Dendritic cell treated with granulocyte-macrophage colony-stimulating factor and Interleukin-4, amounts not matched to agents 40 ng/mL and 50 ng/mL, for 4 days (primary cell): ENCODE measurements at regions of chr16 and their contacts with region 1.

Region 1: DNA sequence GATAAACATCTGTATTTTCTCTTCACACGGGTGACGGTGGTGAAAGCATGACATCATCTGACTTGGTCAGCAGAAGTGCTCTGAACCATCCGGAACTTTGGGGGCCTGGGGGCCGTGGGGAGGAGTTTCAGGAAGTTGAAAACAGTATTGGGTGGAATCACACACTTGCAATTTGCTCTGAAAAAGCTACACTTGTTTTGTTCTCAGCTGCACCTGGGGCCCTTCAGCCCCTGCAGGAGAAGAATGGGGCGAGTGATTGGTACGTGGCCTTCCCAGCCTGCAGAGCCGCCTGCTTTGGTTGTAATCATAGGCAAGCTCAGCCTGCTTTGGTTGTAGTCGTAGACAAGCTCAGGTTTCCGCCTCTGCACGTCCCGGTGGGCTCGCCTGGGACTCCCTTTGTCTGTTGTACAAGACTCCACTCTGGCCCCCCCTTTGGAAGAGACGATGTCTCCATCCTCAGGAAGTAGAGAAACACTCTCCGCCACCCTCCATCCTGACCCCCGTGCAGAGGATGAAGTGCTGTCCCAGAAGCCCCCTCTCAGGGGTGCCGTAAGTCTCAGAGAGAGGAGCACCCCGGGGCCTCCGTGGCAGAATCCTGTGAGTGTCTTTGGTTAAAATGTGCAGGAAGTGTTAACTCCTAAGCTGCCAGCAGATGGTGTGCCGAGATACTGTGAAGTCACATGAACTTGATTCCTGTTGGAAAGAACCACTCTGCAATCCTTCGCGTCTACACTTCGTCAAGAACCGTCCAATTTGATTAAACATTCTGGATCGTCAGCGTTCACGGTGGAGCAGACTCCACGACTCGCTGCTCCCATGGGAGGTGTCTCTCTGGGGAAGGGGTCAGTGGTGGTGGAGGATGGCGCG is 5.4 kb downstream of the BANP start:
- H3K4me3 Mint-ChIP-seq: peak overlapping the region; percentile 72
- H3K27ac Mint-ChIP-seq: peak overlapping the region; percentile 97
- H3K4me1 Mint-ChIP-seq: peaks cover 85% of the 10 kb centered on the region
- H3K27me3 Mint-ChIP-seq: no peaks in the 10 kb centered on the region

Region 2: GRCh38 chr16:88005181-88005581 is 48.6 kb after region 1 on chr16:
- intact Hi-C with region 1: loop called (anchors 5 kb)
- H3K4me3 Mint-ChIP-seq: no peak overlapping the region
- H3K27ac Mint-ChIP-seq: no peak overlapping the region
- H3K4me1 Mint-ChIP-seq: peaks cover 21% of the 10 kb centered on the region
- H3K27me3 Mint-ChIP-seq: no peaks in the 10 kb centered on the region